ENCODE measurements at regions of chr5 and their contacts with region 1.

Region 1: DNA sequence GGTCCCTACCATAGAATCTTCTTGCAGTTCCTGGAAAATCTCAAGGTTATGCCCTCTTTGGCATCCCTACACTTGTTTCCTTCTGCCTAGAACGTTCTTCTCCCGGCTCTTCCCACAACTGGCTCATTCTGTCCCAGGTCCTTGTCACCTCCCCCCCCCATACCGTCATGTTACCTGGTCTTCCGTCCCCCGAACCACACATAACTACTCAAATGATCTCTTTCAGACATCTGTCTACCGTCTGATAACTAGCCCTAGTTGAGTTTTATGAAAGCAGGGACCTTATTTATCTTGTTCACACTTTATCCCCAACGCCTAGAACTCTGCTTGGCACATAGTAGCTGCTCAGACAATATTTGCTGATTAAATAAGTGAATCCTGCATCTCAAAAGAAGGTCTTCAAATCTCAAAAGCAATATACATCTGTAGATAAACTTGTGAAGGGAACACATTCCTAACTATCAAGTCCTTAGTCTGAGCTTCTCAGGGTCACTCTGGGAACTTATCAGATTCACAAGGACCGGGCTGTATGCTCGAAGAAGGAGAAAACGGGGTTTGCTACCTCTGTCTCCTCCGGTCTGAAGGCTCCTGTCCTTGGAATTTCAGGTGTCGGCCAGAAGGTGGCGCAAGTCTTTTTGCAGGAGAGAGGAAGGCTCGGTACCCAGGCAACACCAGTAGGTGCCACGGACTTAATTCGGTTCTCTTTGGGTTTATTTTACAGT is 30.0 kb downstream of the LCP2 start:
- H3K4me3 ChIP-seq: no peak overlapping the region
- H3K27ac ChIP-seq: no peak overlapping the region
- H3K4me1 ChIP-seq: no peaks in the 10 kb centered on the region
- CTCF ChIP-seq: no peak

Region 2: GRCh38 chr5:170247363-170247762 is 20.2 kb before region 1 on chr5:
- CTCF ChIA-PET with region 1: interaction called, 17 read pairs
- POLR2A ChIA-PET with region 1: no interaction called
- H3K4me3 ChIP-seq: no peak overlapping the region
- H3K27ac ChIP-seq: no peak overlapping the region
- H3K4me1 ChIP-seq: peaks cover 21% of the 10 kb centered on the region
- CTCF ChIP-seq: no peak

Region 3: GRCh38 chr5:170256571-170256970 is 11.0 kb before region 1 on chr5:
- CTCF ChIA-PET with region 1: interaction called, 34 read pairs
- POLR2A ChIA-PET with region 1: no interaction called
- H3K4me3 ChIP-seq: no peak overlapping the region
- H3K27ac ChIP-seq: no peak overlapping the region
- H3K4me1 ChIP-seq: peaks cover 8% of the 10 kb centered on the region; the same call in 1 of the 2 replicates
- CTCF ChIP-seq: no peak

Region 4: DNA sequence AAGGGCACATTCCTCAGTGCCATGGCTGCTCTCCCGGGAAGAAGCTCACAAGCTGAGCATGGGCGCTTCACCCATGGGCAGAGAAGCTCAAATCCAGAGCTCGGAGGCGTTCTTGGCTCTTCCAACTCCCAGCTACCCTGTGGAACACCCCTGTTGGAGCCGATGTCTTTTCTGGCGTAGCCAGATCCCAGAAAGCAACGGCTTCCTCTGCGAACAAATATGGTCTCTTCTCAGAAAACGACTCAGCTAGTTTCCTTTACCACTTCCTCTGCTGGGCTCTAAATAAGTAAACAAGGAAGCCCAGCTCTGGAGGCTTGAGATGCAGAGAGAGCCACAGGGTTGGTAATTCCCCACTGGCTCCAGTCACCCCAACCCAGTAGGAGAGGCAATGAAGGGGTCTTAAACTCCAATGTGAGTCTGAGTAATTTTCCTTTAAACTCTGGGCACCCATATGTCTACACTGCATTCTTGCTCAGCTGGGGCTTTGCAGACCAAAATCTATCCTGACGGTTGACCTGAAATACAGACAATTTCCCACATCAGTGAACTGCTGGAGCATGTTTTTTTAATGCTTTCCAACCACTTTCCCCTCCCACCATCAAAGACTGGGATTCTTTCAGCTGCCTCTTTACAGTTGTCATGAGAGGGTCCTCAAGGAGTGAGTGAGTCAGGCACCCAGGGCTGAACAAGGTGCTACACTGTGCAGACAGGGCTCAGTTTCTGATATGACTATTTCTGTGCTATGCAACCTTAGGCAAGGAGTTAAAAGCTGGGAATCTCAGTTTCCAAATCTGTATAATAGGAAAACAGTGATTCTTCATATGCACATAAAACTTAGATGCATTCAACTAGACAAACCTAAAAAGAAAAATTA is 30.2 kb after region 1 on chr5 and contains the start of gene LCP2:
- CTCF ChIA-PET with region 1: interaction called, 13 read pairs
- POLR2A ChIA-PET with region 1: no interaction called
- H3K4me3 ChIP-seq: no peak within 1 kb of the TSS
- H3K27ac ChIP-seq: no peak within 1 kb of the TSS
- H3K4me1 ChIP-seq: no peaks in the 10 kb centered on the region
- CTCF ChIP-seq: no peak